MCF 10A (cell line): ENCODE measurements at regions of chr12 and their contacts with region 1.

Region 1: DNA sequence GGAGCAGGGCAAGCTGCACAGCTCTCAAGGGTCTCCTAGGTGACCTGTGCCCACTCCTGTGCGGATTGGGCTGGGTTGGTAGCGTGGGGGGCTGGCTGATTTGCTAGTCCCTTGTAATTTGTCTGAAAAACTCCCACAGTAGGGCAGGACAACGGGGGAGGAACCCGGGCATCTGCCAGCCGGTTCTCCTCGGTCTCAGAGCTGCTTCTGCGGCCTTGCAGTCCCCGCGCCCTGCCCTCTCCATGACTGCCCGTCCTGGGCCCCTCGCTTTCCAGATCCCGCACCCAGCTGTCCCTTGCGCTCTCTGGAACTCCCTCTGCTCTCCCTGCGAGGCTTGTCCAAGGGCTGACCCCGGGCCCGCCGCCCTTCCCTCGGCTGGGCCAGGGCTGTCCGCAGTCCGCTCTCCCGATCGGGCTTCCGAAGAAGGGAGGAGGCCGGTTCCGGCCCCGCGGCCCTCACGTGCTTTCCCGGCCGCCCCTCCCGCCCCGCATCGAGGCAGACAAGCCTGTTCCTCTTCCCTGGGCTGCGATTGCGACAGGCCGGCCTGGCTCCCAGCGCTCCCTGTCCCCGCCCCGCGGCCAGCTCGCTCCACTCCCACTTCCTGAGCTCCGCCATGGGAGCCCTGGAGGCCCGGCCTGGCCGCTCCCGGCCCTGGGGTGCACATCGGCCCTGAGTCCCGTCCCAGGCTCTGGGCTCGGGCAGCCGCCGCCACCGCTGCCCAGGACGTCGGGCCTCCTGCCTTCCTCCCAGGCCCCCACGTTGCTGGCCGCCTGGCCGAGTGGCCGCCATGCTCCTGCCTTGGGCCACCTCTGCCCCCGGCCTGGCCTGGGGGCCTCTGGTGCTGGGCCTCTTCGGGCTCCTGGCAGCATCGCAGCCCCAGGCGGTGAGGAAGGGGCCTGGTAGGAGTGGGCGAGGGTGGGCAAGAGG is at the start of gene LTBR:
- DNase-seq: peak; percentile 96
- H3K4me3 Mint-ChIP-seq: peak within 1 kb of the TSS; percentile 94
- H3K27ac Mint-ChIP-seq: peak within 1 kb of the TSS; percentile 96
- H3K4me1 Mint-ChIP-seq: peaks cover 35% of the 10 kb centered on the region
- H3K27me3 Mint-ChIP-seq: no peaks in the 10 kb centered on the region
- CTCF ChIP-seq: no peak
- total RNA-seq, gene LTBR: 158 and 169 TPM in 2 replicates

Region 2: DNA sequence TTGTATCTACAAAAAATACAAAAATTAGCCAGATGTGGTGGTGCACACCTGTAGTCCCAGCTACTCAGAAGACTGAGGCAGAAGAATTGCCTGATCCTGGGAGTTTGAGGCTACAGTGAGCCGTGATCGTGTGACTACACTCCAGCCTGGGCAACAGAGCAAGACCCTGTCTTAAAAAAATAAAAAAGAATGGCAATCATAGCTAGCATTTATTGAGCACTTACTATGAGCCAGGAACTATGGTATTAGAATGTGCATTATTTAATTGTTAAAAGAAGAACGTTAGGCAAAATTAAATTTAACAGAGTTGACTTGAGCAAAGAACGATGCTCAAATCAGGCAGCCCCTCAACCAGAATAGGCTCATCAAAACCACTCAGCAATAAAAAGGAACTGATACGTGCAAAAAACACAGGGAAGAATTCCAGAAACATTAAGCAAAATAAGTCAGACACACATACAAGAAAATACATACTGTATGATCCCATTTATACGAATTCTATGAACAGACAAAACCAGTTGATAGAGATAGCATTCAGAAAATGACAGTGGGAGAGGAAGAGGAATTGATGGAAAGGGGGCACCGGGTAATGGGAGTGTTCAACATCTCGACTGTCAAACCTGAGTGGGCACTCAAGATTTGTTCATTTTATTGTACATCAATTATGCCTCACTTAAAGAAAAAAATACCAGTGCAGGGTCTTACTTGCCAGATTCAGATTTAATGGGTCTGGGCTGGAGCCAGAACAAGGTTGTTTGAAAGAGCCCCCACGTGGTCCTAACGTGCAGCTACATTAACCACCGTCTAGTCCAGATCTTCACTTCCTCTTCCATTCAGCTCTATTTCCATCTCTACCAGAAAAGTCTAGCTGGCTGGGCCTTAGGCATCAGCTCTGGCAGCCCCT is 16.5 kb before region 1 on chr12:
- CTCF ChIA-PET with region 1: interaction called, 23 read pairs
- POLR2A ChIA-PET with region 1: interaction called, 120 read pairs
- intact Hi-C with region 1: no loop called
- DNase-seq: no peak
- H3K4me3 Mint-ChIP-seq: no peak overlapping the region
- H3K27ac Mint-ChIP-seq: no peak overlapping the region
- H3K4me1 Mint-ChIP-seq: peaks cover 43% of the 10 kb centered on the region
- H3K27me3 Mint-ChIP-seq: no peaks in the 10 kb centered on the region
- CTCF ChIP-seq: no peak

Region 3: GRCh38 chr12:6399884-6400644 is 16.2 kb after region 1 on chr12:
- CTCF ChIA-PET with region 1: no interaction called
- POLR2A ChIA-PET with region 1: interaction called, 10 read pairs
- intact Hi-C with region 1: no loop called
- DNase-seq: no peak
- H3K4me3 Mint-ChIP-seq: no peak overlapping the region
- H3K27ac Mint-ChIP-seq: no peak overlapping the region
- H3K4me1 Mint-ChIP-seq: no peaks in the 10 kb centered on the region
- H3K27me3 Mint-ChIP-seq: no peaks in the 10 kb centered on the region
- CTCF ChIP-seq: no peak